ENCODE measurements at regions of chrX and their contacts with region 1.

Region 1: DNA sequence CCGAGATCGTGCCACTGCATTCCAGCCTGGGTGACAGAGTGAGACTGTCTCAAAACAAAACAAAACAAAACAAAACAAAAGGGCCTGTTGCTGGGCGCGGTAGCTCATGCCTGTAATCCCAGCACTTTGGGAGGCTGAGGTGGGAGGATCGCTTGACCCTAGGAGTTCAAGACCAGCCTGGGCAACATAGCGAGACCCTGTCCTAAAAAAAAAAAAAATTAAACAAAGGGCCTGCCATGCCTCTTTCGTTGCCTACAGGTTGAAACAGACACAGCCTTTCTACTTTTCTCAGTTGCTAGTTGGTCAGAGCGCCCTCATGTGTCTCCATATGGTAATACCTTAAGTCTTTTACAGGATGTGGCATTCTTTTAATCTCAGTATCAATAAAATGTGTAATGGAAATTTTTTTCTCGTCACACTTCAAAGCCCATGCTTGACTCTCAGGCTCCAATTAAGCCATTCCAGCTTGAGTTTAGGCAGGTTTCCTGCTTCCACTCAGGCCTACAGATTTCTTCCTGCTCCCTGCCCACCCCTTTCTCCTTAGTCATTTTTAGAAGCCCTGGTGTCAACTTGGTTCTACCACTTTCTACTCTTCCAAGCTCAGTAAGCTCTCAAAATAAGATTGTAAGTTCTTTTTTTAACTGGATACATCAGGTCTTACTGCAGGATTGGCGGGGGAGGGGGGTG is 4.7 kb upstream of the SOWAHD start:
- DNase-seq: no peak
- CTCF ChIP-seq: peak; percentile 50

Region 2: GRCh38 chrX:119589810-119590209 is 163.9 kb before region 1 on chrX:
- CTCF ChIA-PET with region 1: no interaction called
- POLR2A ChIA-PET with region 1: interaction called, 11 read pairs
- DNase-seq: no peak
- CTCF ChIP-seq: no peak

Region 3: GRCh38 chrX:119655125-119655524 is 98.6 kb before region 1 on chrX:
- CTCF ChIA-PET with region 1: no interaction called
- POLR2A ChIA-PET with region 1: no interaction called
- DNase-seq: peak; percentile 31
- CTCF ChIP-seq: no peak

Region 4: GRCh38 chrX:119729408-119730201 is 24.1 kb before region 1 on chrX:
- CTCF ChIA-PET with region 1: interaction called, 19 read pairs
- POLR2A ChIA-PET with region 1: no interaction called
- DNase-seq: peak; percentile 59
- CTCF ChIP-seq: peak; percentile 74

Region 5: DNA sequence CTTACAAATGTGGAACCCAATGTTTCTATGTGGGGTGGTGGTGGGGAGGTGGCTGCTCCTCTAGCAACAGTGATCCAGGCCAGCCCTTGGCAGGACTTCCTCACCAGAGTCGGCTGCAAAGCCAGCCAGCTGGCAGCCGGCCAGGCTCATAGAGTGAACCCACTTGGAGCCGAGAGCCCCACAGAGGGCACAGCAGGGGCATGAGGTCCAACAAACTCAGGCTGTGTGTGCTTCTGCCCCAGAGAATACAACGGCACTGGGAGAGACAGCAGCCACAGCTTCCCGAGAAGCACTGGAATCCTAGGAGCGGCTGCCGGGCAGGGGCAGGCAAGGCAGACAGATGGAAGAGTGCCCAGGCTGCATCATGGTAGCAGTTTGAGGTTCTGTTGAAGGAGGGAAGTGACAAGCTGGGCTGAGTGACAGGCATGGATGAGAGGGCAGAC is 18.8 kb before region 1 on chrX:
- CTCF ChIA-PET with region 1: interaction called, 19 read pairs
- POLR2A ChIA-PET with region 1: no interaction called
- DNase-seq: no peak
- CTCF ChIP-seq: no peak

Region 6: GRCh38 chrX:119775517-119776238 is 22.0 kb after region 1 on chrX:
- CTCF ChIA-PET with region 1: interaction called, 14 read pairs
- POLR2A ChIA-PET with region 1: interaction called, 6 read pairs
- DNase-seq: no peak
- CTCF ChIP-seq: no peak

Region 7: GRCh38 chrX:119784747-119785446 is 31.2 kb after region 1 on chrX:
- CTCF ChIA-PET with region 1: interaction called, 24 read pairs
- POLR2A ChIA-PET with region 1: interaction called, 4 read pairs
- DNase-seq: peak; percentile 34
- CTCF ChIP-seq: peak; percentile 32

Region 8: DNA sequence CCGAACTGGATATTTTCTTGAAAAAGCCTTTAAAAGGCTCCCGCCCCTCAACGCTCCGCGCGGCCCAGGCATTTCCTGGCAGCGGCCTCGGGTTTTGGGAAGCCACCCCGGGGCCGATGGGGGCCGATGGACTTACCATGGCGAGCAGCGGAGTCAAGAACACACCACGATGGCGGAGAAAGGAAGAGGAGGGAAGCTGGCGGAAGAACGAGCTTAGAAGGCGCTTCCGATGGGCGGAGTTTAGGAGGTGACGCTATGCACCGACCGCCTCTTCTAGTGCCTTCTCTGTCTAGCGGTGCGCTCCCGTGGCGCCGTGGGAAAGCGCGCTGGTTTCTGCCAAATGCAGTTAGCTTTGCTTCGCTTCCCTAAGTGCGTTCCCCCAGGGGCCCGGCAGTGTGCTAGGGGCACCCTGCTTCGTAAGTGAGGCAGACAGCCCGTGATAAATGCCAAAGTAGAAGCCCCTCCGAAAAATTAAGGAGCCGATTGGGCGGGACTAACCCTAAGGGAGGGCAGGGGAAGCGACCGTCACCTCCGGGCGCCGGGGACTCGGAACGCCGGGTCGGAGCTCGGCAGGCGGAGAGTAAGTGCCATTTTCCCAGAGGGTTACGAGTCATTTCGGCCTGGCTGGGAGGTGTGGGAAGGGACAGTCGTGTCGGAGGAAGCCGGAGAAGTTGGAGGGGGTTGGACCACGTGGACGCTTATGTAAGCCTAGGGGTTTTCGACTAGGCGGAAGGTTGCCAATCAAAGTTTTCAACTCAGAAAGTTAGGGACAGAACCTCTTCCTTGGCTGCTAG is 37.9 kb after region 1 on chrX and contains the start of gene RPL39:
- CTCF ChIA-PET with region 1: interaction called, 24 read pairs
- POLR2A ChIA-PET with region 1: interaction called, 27 read pairs
- DNase-seq: peak; percentile 80
- CTCF ChIP-seq: no peak

Region 9: DNA sequence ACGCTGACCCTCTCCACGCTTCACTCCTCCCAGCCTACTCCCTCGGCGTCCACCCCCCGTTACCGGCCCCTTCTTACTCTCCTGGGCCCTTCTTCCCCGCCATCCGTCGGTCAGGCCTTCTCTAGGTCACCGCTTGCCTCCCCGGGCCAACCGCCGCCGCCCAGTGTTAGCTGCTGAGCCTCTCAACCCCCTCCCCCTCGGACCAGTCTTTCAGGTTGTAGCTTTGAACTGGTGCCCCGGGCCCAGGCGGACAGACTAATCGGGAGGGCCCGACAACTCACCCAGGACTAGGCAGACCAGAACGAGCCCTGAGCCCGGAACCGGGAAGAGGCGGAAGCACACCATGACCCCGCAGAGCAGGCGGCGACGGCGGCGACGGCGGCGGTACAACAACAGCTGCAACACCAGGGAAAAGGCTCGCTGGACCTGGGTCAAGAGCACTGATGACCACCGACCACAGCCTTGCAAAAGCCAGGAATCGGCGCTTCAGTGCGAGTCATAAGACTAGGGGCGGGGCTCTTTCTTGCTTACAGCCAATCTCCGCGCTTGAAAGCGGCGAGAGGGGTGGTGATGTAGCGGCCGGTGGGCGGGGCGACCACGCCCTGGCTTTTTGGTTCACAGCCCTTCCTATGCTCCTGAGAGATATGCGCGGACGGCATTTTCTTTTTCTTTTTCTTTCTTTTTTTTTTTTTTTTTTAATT is 715.3 kb after region 1 on chrX and contains the start of gene LAMP2:
- CTCF ChIA-PET with region 1: no interaction called
- POLR2A ChIA-PET with region 1: no interaction called
- DNase-seq: peak; percentile 84
- CTCF ChIP-seq: no peak

Measured in GM10248 (cell line).